Endothelial cell of umbilical vein (primary cell): ENCODE measurements at regions of chr12 and their contacts with region 1.

Region 1: DNA sequence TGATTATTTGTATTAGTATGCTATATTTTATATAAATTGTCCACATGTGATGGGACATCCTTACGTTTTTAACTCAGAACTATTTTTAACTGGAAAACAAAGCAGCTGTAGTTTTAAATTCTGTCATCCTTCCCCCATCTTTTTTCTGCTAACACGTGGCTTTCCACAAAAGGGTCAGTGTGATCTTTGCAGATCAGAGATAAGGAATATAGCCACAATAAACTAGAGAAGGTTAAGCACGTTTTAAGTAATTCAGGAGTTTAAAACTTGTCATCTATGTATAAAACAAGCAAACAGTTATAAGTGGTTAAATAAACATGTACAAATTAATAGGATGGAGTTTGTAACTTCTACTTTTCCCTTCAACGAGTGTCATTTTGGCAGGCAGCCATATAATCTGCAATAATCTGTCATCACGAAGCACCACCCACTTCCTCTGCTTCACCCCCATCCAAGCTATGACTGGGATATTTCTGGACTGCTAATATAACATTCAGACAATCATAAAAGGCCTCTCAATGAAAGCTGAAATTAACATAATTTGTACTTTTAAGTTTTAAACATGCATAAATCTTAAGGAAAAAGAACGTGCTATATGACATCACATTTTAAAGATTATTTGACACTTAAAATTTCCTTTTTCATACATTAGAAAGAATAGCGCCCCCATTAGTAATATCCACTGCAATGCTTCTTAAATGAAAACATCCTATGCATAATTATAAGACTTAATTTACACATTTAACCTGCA is 15.3 kb downstream of the TAOK3 start:
- DNase-seq: peak; percentile 70
- H3K4me3 ChIP-seq: peak overlapping the region in 1 of 3 experiments; percentile 72
- H3K27ac ChIP-seq: peak overlapping the region; percentile 50
- H3K4me1 ChIP-seq: peaks cover 48% of the 10 kb centered on the region
- H3K27me3 ChIP-seq: no peaks in the 10 kb centered on the region
- CTCF ChIP-seq: no peak
- POLR2A ChIP-seq: no peak

Region 2: DNA sequence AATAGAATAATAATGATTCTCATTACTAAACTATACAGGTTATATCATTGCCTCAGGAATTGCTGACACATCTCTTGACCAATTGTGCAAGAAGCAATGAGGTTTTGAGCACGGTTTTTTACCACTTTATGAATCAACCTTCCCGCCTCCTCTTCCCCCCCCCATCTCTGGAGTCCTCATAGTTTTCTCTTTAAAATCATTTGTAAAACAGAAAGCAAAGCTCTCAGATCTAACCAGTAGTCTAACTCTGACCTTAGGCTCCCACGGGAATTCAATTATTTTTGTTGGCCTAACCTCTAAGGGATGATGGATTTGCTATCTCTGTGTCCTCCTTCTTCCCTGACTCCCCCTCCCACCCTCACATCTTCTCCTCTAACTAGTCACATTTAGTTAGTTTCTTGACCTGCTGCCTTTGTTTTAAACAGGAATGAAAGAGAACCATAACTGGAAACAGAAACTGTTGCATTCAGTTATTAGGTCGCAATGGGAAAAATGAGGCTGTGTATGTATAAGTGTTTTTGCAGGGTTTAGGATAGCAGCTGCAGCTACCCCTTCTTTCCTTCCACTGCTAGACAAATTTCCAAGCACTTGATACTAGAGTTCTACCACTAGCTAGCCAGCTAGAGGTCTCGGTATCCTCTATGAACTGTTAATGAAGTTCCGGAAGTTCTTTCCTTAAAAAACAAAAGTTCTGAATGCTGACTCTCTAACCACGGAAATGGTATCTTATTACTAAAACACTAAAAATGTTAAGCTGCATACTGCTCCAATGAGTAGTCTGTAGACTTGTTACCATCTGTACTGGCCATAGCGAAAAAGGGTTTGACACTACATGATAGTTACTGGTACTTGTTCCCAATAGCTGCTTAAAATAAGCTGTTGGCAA is 50.1 kb before region 1 on chr12:
- CTCF ChIA-PET with region 1: interaction called, 8 read pairs
- POLR2A ChIA-PET with region 1: no interaction called
- dilution Hi-C with region 1: no loop called
- intact Hi-C with region 1: loop called (anchors 2 kb)
- DNase-seq: peak; percentile 63
- H3K4me3 ChIP-seq: peak overlapping the region in 2 of 3 experiments; percentile 33 to 40
- H3K27ac ChIP-seq: peak overlapping the region; percentile 88
- H3K4me1 ChIP-seq: peaks cover 22% of the 10 kb centered on the region
- H3K27me3 ChIP-seq: no peaks in the 10 kb centered on the region
- CTCF ChIP-seq: no peak
- POLR2A ChIP-seq: no peak

Region 3: GRCh38 chr12:118330421-118331018 is 26.9 kb before region 1 on chr12:
- CTCF ChIA-PET with region 1: interaction called, 7 read pairs
- POLR2A ChIA-PET with region 1: no interaction called
- dilution Hi-C with region 1: no loop called
- intact Hi-C with region 1: loop called (anchors 2 kb)
- DNase-seq: peak; percentile 88
- H3K4me3 ChIP-seq: no peak overlapping the region
- H3K27ac ChIP-seq: peak overlapping the region; percentile 37
- H3K4me1 ChIP-seq: peaks cover 18% of the 10 kb centered on the region
- H3K27me3 ChIP-seq: no peaks in the 10 kb centered on the region
- CTCF ChIP-seq: no peak
- POLR2A ChIP-seq: no peak

Region 4: DNA sequence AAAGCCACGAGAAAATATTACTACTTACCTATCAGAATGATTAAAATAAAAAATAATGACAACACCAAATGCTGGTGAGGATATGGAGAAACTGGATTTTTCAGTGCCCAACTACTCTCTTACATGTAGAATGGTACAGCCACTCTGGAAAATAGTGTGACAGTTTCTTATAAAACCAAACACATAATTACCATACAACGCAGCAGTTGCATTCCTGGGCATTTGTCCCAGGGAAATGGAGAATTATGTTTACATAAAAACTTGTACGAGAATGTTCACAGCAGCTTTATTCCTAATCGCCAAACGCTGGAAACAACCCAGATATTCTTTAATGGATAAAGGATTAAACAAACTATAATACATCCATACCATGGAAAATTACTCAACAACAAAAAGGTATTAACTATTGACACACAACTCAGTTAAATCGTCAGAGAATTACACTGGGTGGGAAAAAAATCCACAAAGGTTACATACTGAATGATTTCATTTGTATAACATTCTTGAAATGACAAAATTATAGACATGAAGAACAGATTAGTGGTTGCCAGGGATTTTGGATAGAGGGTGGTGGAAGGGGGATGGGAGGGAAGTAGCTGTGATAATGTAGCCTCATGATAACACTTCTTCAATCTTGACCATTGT is 20.1 kb before region 1 on chr12:
- CTCF ChIA-PET with region 1: interaction called, 7 read pairs
- POLR2A ChIA-PET with region 1: no interaction called
- dilution Hi-C with region 1: no loop called
- intact Hi-C with region 1: loop called (anchors 2 kb)
- DNase-seq: no peak
- H3K4me3 ChIP-seq: no peak overlapping the region
- H3K27ac ChIP-seq: no peak overlapping the region
- H3K4me1 ChIP-seq: no peaks in the 10 kb centered on the region
- H3K27me3 ChIP-seq: no peaks in the 10 kb centered on the region
- CTCF ChIP-seq: no peak
- POLR2A ChIP-seq: no peak

Region 5: DNA sequence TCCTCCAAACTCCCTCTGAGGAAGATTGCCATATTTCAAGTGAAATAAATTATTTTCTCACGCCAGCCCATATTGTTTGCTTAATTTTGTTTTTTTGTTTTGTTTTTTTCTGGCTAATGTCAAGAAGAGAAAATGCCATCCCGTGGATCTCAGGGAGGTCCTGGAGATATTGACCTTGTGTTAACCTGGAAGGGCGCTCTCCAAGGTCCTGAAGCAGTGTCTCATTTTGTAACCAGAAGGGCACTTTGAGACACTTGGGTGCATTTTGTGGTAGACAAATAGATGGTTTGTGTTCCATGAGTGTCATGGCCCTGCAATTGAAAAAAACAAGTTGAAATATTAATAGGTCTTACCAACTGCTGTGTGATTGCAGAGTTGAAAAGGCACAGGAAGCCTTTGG is 287.8 kb after region 1 on chr12:
- CTCF ChIA-PET with region 1: no interaction called
- POLR2A ChIA-PET with region 1: no interaction called
- dilution Hi-C with region 1: no loop called
- intact Hi-C with region 1: no loop called
- DNase-seq: no peak
- H3K4me3 ChIP-seq: no peak overlapping the region
- H3K27ac ChIP-seq: no peak overlapping the region
- H3K4me1 ChIP-seq: no peaks in the 10 kb centered on the region
- H3K27me3 ChIP-seq: no peaks in the 10 kb centered on the region
- CTCF ChIP-seq: no peak
- POLR2A ChIP-seq: no peak